Heart left ventricle (tissue), 16 donors: ENCODE measurements at regions of chr4 and their contacts with region 1.

Region 1: DNA sequence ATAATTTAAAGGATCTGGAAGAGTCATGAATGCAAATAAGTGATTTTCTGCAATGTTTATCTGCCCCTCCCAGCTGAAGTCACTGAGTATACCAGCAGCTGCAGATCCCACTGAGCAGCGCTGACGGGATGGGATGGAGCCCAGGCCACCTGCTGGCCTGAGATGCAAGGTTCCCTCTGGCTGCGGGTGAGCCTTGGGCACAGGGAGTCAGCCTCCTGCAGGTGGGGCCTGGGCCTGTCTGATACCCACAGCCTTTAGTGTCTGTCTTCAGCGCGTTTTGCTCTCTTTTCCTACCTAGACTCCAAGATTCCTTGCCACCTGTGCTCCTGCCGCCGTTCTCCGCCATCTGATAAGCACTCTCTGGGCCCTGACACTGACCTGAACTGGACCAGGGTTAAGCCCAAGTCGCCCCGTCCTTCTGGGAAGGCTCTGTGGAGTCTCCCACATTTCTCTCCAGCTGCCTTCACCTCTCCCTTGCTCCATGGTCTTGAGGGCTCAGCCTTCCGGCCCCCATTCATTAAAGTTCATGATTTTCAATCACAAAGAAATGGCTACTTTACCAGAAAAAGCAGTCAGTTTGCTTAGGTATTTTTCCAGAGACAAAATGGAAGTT is 223.1 kb upstream of the FAT1 start:
- DNase-seq: no peak
- ATAC-seq: peak in 2 of 4 donors; percentile 29 to 36
- H3K4me3 ChIP-seq: no peak overlapping the region
- H3K27ac ChIP-seq: no peak overlapping the region
- H3K4me1 ChIP-seq: peaks cover 0 to 30% (median 9%) of the 10 kb centered on the region in 12 donors
- H3K27me3 ChIP-seq: no peaks in the 10 kb centered on the region
- CTCF ChIP-seq: peak in 4 of 12 donors; percentile 12 to 26 (median 12)
- POLR2A ChIP-seq: no peak

Region 2: GRCh38 chr4:186859420-186859819 is 87.4 kb before region 1 on chr4:
- intact Hi-C with region 1: no loop called
- DNase-seq: no peak
- ATAC-seq: no peak
- H3K4me3 ChIP-seq: no peak overlapping the region
- H3K27ac ChIP-seq: no peak overlapping the region
- H3K4me1 ChIP-seq: no peaks in the 10 kb centered on the region
- H3K27me3 ChIP-seq: no peaks in the 10 kb centered on the region
- CTCF ChIP-seq: no peak
- POLR2A ChIP-seq: no peak

Region 3: DNA sequence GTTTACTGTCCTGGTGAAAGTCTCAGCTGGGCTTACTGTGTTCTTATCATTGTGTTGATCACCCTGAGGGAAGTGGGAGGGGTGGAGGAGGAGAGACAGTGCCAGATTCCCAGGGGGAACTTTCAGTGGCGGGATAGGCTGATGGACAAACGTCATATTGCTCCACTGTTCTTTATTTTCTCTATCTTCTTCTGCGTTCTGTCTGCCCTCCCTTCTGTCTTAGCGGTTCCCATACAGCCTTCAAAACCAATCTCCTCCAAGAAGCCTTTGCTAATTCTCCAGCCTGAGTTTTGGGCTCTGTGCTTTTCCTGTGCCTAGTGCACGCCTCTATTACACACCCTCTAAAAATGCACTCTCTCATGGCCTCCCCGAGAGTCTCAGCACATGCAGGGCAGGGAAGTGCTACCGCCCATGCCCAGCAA is 225.6 kb after region 1 on chr4:
- intact Hi-C with region 1: loop called in 1 of 10 experiments (anchors 10 kb)
- DNase-seq: no peak
- ATAC-seq: peak in 2 of 4 donors; percentile 47 to 52
- H3K4me3 ChIP-seq: no peak overlapping the region
- H3K27ac ChIP-seq: peak overlapping the region in 2 of 12 donors; percentile 22 to 24
- H3K4me1 ChIP-seq: no peaks in the 10 kb centered on the region
- H3K27me3 ChIP-seq: no peaks in the 10 kb centered on the region
- CTCF ChIP-seq: no peak
- POLR2A ChIP-seq: no peak